ENCODE measurements at regions of chr10 and their contacts with region 1.

Region 1: GRCh38 chr10:45000752-45001380 is at the start of gene ZNF22:
- DNase-seq: peak; percentile 83 to 91
- ATAC-seq: peak; percentile 74
- H3K4me3 ChIP-seq: peak within 1 kb of the TSS; percentile 69 to 85
- H3K27ac ChIP-seq: peak within 1 kb of the TSS; percentile 80 to 85
- H3K4me1 ChIP-seq: peaks cover 3 to 7% of the 10 kb centered on the region in 2 donors
- H3K27me3 ChIP-seq: no peaks in the 10 kb centered on the region
- total RNA-seq, gene ZNF22: 19.6 to 20.9 TPM

Region 2: GRCh38 chr10:44492662-44493061 is 508.2 kb before region 1 on chr10:
- intact Hi-C with region 1: no loop called
- DNase-seq: no peak
- ATAC-seq: no peak
- H3K4me3 ChIP-seq: no peak overlapping the region
- H3K27ac ChIP-seq: no peak overlapping the region
- H3K4me1 ChIP-seq: no peaks in the 10 kb centered on the region
- H3K27me3 ChIP-seq: no peaks in the 10 kb centered on the region

Region 3: DNA sequence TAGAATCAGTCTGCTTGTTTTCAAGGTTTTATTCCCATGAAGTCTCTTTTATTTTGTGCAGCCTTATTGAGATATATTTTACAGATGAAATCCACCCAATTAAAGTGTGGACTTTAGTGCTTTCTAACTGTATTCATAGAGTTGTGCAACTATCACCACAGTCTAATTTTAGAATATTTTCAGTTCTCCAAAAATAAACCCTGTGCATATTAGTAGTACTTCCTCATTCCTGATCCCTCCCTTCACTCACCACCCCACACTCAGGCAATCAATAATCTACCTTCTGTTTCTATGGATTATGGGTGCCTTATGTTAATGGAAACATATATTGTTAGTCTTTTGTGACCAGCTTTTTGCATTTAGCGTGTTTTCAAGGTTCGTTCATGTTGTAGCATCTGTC is 275.5 kb before region 1 on chr10:
- intact Hi-C with region 1: no loop called
- DNase-seq: no peak
- ATAC-seq: peak; percentile 69
- H3K4me3 ChIP-seq: no peak overlapping the region
- H3K27ac ChIP-seq: peak overlapping the region in 1 of 2 donors; percentile 76
- H3K4me1 ChIP-seq: peaks cover 4% of the 10 kb centered on the region in 2 donors
- H3K27me3 ChIP-seq: no peaks in the 10 kb centered on the region

Region 4: DNA sequence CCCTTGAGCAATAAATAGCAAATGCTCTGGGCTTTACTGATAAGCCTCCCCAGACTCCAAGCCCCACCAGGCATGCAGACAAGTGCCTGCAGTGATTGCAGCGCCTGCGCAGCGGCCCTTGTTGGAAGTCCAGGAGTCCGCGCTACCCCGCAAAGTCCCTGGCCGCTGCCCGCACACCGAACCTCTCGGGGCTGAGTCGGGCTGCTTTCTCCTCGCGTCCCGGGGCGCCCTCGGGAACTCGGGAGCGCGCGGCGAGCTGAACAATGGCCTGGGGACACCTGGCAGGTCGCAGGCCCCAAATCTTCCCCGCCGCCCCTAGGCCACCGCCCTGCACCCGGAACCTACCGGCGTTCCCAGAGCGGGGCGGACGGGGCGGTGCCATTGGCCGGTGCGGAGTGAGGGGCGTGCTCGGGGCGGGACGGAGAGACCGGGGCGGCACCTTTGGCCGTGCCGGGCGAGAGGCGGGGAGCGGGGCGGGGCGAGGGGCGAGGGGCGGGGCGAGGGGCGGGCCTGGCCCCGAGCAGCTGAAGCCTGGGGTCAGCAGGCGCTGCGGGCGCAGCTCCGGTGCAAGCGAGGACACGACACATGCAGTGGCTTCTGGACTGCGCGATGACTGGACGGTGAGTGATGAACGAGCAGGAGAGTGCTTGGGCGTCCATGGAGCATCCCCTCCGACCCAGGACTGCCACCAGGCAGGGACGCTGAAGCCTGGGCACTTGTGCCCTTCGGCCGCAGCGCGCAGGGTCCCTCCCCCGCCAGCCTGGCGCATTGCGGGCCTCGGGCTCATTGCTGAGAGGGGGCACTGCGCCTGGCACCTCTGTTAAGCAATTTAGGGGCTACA is 41.4 kb before region 1 on chr10 and contains the start of gene RASSF4:
- intact Hi-C with region 1: loop called in 1 of 2 experiments (anchors 2 kb)
- DNase-seq: peak; percentile 96 to 97
- ATAC-seq: peak; percentile 94
- H3K4me3 ChIP-seq: peak within 1 kb of the TSS; percentile 63 to 83
- H3K27ac ChIP-seq: peak within 1 kb of the TSS; percentile 47 to 71
- H3K4me1 ChIP-seq: peaks cover 0 to 7% of the 10 kb centered on the region in 2 donors
- H3K27me3 ChIP-seq: no peaks in the 10 kb centered on the region
- total RNA-seq, gene RASSF4: 26.7 to 82.1 TPM

Region 5: GRCh38 chr10:46022978-46023702 is 1022.3 kb after region 1 on chr10:
- intact Hi-C with region 1: loop called in 1 of 2 experiments (anchors 5 kb)
- DNase-seq: peak; percentile 96 to 97
- ATAC-seq: peak; percentile 98
- H3K4me3 ChIP-seq: peak overlapping the region; percentile 8 to 51
- H3K27ac ChIP-seq: peak overlapping the region in 1 of 2 donors; percentile 54
- H3K4me1 ChIP-seq: peaks cover 3 to 6% of the 10 kb centered on the region in 2 donors
- H3K27me3 ChIP-seq: no peaks in the 10 kb centered on the region

Measured in aorta (tissue), 5 donors.